K562 (cell line): ENCODE measurements at regions of chr3 and their contacts with region 1.

Region 1: GRCh38 chr3:185733980-185734724 is 90.7 kb downstream of the IGF2BP2 start:
- DNase-seq: peak; percentile 64 to 87 (median 74)
- ATAC-seq: peak; percentile 93
- H3K4me3 ChIP-seq: no peak overlapping the region
- H3K27ac ChIP-seq: peak overlapping the region; percentile 39; the same call in 1 of the 3 replicates
- H3K4me1 ChIP-seq: peaks cover 8 to 33% of the 10 kb centered on the region in 2 experiments; a peak in 4 of 5 replicates
- H3K27me3 ChIP-seq: no peaks in the 10 kb centered on the region
- CTCF ChIP-seq: peak; percentile 63 to 87 (median 79)
- EP300 ChIP-seq: no peak
- POLR2A ChIP-seq: no peak
- RAD21 ChIP-seq: peak; percentile 83 to 92

Region 2: GRCh38 chr3:185659942-185660921 is 73.9 kb before region 1 on chr3:
- CTCF ChIA-PET with region 1: no interaction called
- POLR2A ChIA-PET with region 1: interaction called, 4 read pairs
- in situ Hi-C with region 1: no loop called
- intact Hi-C with region 1: loop called (anchors 2 kb)
- DNase-seq: peak; percentile 80 to 89 (median 82)
- ATAC-seq: peak; percentile 95
- H3K4me3 ChIP-seq: no peak overlapping the region
- H3K27ac ChIP-seq: no peak overlapping the region; the same call in 2 of the 3 replicates
- H3K4me1 ChIP-seq: peaks cover 2 to 7% of the 10 kb centered on the region in 2 experiments; a peak in 4 of 5 replicates
- H3K27me3 ChIP-seq: no peaks in the 10 kb centered on the region
- CTCF ChIP-seq: peak; percentile 94 to 98 (median 95)
- EP300 ChIP-seq: no peak
- POLR2A ChIP-seq: no peak
- RAD21 ChIP-seq: peak; percentile 86 to 89

Region 3: GRCh38 chr3:185744997-185745843 is 11.1 kb after region 1 on chr3:
- CTCF ChIA-PET with region 1: no interaction called
- POLR2A ChIA-PET with region 1: interaction called, 18 read pairs
- in situ Hi-C with region 1: no loop called
- intact Hi-C with region 1: no loop called
- DNase-seq: no peak
- ATAC-seq: peak; percentile 68
- H3K4me3 ChIP-seq: no peak overlapping the region
- H3K27ac ChIP-seq: peak overlapping the region; percentile 23; the same call in 1 of the 3 replicates
- H3K4me1 ChIP-seq: peaks cover 4 to 15% of the 10 kb centered on the region in 2 experiments; a peak in 4 of 5 replicates
- H3K27me3 ChIP-seq: no peaks in the 10 kb centered on the region
- CTCF ChIP-seq: no peak
- EP300 ChIP-seq: no peak
- POLR2A ChIP-seq: no peak
- RAD21 ChIP-seq: no peak

Region 4: DNA sequence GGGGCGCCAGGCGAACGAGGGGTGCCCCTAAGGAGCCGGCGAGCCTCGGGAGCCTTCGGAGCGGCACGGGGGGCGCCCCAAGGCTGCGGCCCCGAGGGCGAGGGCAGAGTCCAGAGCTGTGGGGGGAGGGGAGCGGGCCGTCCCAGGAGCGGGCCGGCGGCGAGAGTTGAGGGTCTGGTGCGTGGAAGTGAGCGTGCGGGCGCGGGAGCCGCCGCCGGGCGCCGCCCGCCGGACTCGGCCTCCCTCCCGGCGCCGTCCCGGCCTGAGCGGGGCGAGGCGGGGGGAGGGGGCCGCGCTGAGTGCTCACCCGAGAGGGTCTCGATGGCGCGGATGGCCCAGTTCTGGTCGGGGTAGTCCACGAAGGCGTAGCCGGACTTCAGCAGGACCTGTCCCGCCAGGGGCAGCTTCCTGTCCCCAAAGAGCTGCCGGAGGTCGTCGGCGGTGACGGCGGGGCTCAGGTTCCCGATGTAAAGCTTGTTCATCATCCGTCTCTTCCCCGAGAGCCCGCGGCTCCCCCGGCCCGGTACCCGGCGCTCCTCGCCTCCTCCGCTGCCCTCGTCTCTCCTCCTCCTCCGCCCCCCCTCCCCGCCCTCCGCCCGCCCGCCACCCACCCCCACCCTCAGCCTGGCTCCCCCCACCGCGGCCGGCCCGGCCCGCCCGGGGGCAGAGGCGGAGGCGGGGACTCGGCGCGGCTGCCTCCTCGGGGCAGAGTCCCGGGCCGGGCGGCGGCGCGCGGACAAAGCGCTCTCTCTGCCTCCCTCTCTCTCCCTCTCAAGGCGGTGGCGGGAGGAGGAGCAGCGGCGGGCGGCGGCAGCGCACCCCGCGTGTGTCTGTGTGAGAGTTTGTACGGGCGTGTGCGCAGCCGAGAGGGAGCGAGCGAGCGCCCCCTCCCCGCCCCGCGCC is 90.6 kb after region 1 on chr3 and contains the start of gene IGF2BP2:
- CTCF ChIA-PET with region 1: interaction called, 4 read pairs
- POLR2A ChIA-PET with region 1: interaction called, 4 read pairs
- in situ Hi-C with region 1: no loop called
- intact Hi-C with region 1: loop called (anchors 2 kb)
- DNase-seq: peak; percentile 83 to 87 (median 84)
- ATAC-seq: peak; percentile 69
- H3K4me3 ChIP-seq: peak within 1 kb of the TSS; percentile 91
- H3K27ac ChIP-seq: peak within 1 kb of the TSS; percentile 93
- H3K4me1 ChIP-seq: peaks cover 9 to 21% of the 10 kb centered on the region in 2 experiments; a peak in 4 of 5 replicates
- H3K27me3 ChIP-seq: no peaks in the 10 kb centered on the region
- CTCF ChIP-seq: peak in 2 of 3 experiments; percentile 16 to 18; a peak in 2 of 6 replicates
- EP300 ChIP-seq: no peak
- POLR2A ChIP-seq: peak; percentile 71
- RAD21 ChIP-seq: peak in 1 of 2 experiments; percentile 15; a peak in 3 of 4 replicates
- polyA plus RNA-seq, gene IGF2BP2: 3.2 to 3.5 TPM

Region 5: GRCh38 chr3:185912929-185913901 is 179.1 kb after region 1 on chr3:
- CTCF ChIA-PET with region 1: no interaction called
- POLR2A ChIA-PET with region 1: interaction called, 48 read pairs
- in situ Hi-C with region 1: no loop called
- intact Hi-C with region 1: loop called (anchors 5 kb)
- DNase-seq: no peak
- ATAC-seq: peak; percentile 47
- H3K4me3 ChIP-seq: no peak overlapping the region
- H3K27ac ChIP-seq: no peak overlapping the region
- H3K4me1 ChIP-seq: no peaks in the 10 kb centered on the region
- H3K27me3 ChIP-seq: no peaks in the 10 kb centered on the region
- CTCF ChIP-seq: no peak
- EP300 ChIP-seq: no peak
- POLR2A ChIP-seq: peak; percentile 73
- RAD21 ChIP-seq: no peak

Region 6: GRCh38 chr3:185976977-185977678 is 243.0 kb after region 1 on chr3:
- CTCF ChIA-PET with region 1: no interaction called
- POLR2A ChIA-PET with region 1: no interaction called
- in situ Hi-C with region 1: no loop called
- intact Hi-C with region 1: loop called (anchors 1 kb)
- DNase-seq: peak; percentile 72 to 83 (median 74)
- ATAC-seq: peak; percentile 97
- H3K4me3 ChIP-seq: no peak overlapping the region
- H3K27ac ChIP-seq: no peak overlapping the region; the same call in 2 of the 3 replicates
- H3K4me1 ChIP-seq: peaks cover 0 to 13% of the 10 kb centered on the region in 2 experiments; a peak in 3 of 5 replicates
- H3K27me3 ChIP-seq: no peaks in the 10 kb centered on the region
- CTCF ChIP-seq: peak; percentile 85 to 97 (median 89)
- EP300 ChIP-seq: peak; percentile 91
- POLR2A ChIP-seq: no peak
- RAD21 ChIP-seq: peak; percentile 58 to 76